T-cell (primary cell): ENCODE measurements at regions of chr13 and their contacts with region 1.

Region 1: GRCh38 chr13:79423801-79424642 is 18.0 kb upstream of the RBM26 start:
- DNase-seq: peak in 2 of 35 experiments; percentile 6 to 71
- ATAC-seq: peak in 3 of 4 experiments; percentile 48 to 61 (median 57)
- H3K4me3 ChIP-seq: no peak overlapping the region
- H3K4me3 Mint-ChIP-seq: no peak overlapping the region
- H3K27ac ChIP-seq: no peak overlapping the region
- H3K27ac Mint-ChIP-seq: no peak overlapping the region
- H3K4me1 ChIP-seq: no peaks in the 10 kb centered on the region
- H3K4me1 Mint-ChIP-seq: no peaks in the 10 kb centered on the region
- H3K27me3 ChIP-seq: no peaks in the 10 kb centered on the region
- H3K27me3 Mint-ChIP-seq: no peaks in the 10 kb centered on the region

Region 2: GRCh38 chr13:79393564-79394249 is 30.3 kb before region 1 on chr13:
- CTCF ChIA-PET with region 1: interaction called, 6 to 10 read pairs
- POLR2A ChIA-PET with region 1: no interaction called
- DNase-seq: peak; percentile 12 to 73 (median 42)
- ATAC-seq: peak; percentile 79 to 84 (median 81)
- H3K4me3 ChIP-seq: peak overlapping the region; percentile 23 to 66
- H3K4me3 Mint-ChIP-seq: peak overlapping the region; percentile 75 to 80 (median 78)
- H3K27ac ChIP-seq: peak overlapping the region; percentile 55
- H3K27ac Mint-ChIP-seq: peak overlapping the region; percentile 88 to 92
- H3K4me1 ChIP-seq: peaks cover 25 to 54% of the 10 kb centered on the region in 2 experiments
- H3K4me1 Mint-ChIP-seq: peaks cover 65 to 78% (median 67%) of the 10 kb centered on the region in 3 donors
- H3K27me3 ChIP-seq: no peaks in the 10 kb centered on the region
- H3K27me3 Mint-ChIP-seq: no peaks in the 10 kb centered on the region

Region 3: GRCh38 chr13:79457948-79458347 is 33.9 kb after region 1 on chr13:
- CTCF ChIA-PET with region 1: interaction called, 6 to 12 read pairs
- POLR2A ChIA-PET with region 1: interaction called in 1 of 2 experiments, 3 read pairs
- DNase-seq: no peak
- ATAC-seq: peak in 2 of 4 experiments; percentile 36 to 50
- H3K4me3 ChIP-seq: no peak overlapping the region
- H3K4me3 Mint-ChIP-seq: no peak overlapping the region
- H3K27ac ChIP-seq: no peak overlapping the region
- H3K27ac Mint-ChIP-seq: no peak overlapping the region
- H3K4me1 ChIP-seq: no peaks in the 10 kb centered on the region
- H3K4me1 Mint-ChIP-seq: peaks cover 0 to 13% (median 4%) of the 10 kb centered on the region in 3 donors
- H3K27me3 ChIP-seq: no peaks in the 10 kb centered on the region
- H3K27me3 Mint-ChIP-seq: no peaks in the 10 kb centered on the region

Region 4: DNA sequence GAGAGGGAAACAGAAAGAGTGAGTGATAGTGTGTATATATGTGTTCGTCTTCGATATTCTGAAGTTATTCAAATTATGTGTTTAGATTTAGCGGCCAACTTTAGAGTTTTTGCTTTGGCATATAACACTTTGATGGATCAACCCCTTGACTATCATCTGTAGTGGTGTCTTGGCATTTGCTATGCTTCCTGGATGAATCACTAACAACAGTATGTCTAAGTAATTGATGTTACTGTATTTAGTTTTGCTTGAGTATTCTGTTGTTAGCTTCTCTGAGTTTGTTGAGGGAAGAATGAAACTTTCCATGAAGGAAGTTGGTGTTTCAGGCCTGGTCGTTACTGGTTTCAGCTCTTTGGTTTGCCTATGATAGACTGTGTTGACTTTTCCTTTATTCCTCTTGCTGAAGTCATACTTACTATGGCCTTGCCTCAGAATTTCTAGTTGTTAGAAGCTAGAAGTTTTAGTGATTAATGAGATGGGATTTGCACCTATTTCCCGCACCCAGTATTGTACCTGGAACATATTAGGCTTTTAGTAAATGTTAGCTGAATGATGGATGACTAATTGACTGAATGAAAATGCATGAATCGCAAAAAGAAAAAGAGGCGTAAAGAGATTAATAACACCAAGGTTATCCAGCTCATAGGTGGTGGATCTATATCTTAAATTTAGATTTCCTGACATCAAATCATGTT is 77.7 kb after region 1 on chr13:
- CTCF ChIA-PET with region 1: interaction called, 6 to 11 read pairs
- POLR2A ChIA-PET with region 1: no interaction called
- DNase-seq: no peak
- ATAC-seq: no peak
- H3K4me3 ChIP-seq: no peak overlapping the region
- H3K4me3 Mint-ChIP-seq: no peak overlapping the region
- H3K27ac ChIP-seq: no peak overlapping the region
- H3K27ac Mint-ChIP-seq: no peak overlapping the region
- H3K4me1 ChIP-seq: no peaks in the 10 kb centered on the region
- H3K4me1 Mint-ChIP-seq: peaks cover 40 to 44% (median 42%) of the 10 kb centered on the region in 3 donors
- H3K27me3 ChIP-seq: no peaks in the 10 kb centered on the region
- H3K27me3 Mint-ChIP-seq: no peaks in the 10 kb centered on the region

Region 5: DNA sequence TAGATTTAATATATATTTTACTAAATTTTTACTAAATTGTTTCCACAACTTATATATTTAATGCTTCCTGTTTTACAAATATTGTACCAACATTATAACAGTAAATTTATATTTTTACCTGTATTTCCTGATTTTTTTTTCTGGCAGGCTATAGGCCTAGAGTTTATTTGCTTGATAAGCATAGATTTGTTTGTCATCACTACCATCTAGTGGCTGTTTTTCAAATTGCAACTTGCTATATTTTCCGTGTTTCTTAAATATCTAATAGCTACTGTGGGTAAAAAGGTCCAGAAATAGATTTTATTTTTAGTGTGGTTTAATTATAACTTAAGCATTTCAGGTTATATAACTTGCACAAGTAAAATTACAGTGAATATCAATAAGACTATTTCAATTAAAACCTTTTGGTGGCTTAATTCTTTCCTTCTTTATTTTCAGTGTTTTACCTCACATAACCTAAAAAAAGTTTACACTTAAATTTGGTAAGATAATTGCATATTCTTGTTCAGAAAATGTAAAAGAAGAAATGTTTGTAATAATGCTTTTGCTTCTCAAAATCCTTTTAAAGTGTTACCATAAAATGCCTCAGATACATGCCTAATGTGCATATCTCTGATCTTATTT is 117.5 kb after region 1 on chr13:
- CTCF ChIA-PET with region 1: interaction called, 84 to 272 read pairs
- POLR2A ChIA-PET with region 1: interaction called, 4 to 5 read pairs
- DNase-seq: peak in 2 of 35 experiments; percentile 36 to 83
- ATAC-seq: peak in 2 of 4 experiments; percentile 55 to 57
- H3K4me3 ChIP-seq: no peak overlapping the region
- H3K4me3 Mint-ChIP-seq: no peak overlapping the region
- H3K27ac ChIP-seq: no peak overlapping the region
- H3K27ac Mint-ChIP-seq: no peak overlapping the region
- H3K4me1 ChIP-seq: no peaks in the 10 kb centered on the region
- H3K4me1 Mint-ChIP-seq: no peaks in the 10 kb centered on the region
- H3K27me3 ChIP-seq: no peaks in the 10 kb centered on the region
- H3K27me3 Mint-ChIP-seq: no peaks in the 10 kb centered on the region